ENCODE measurements at regions of chr17 and their contacts with region 1.

Region 1: DNA sequence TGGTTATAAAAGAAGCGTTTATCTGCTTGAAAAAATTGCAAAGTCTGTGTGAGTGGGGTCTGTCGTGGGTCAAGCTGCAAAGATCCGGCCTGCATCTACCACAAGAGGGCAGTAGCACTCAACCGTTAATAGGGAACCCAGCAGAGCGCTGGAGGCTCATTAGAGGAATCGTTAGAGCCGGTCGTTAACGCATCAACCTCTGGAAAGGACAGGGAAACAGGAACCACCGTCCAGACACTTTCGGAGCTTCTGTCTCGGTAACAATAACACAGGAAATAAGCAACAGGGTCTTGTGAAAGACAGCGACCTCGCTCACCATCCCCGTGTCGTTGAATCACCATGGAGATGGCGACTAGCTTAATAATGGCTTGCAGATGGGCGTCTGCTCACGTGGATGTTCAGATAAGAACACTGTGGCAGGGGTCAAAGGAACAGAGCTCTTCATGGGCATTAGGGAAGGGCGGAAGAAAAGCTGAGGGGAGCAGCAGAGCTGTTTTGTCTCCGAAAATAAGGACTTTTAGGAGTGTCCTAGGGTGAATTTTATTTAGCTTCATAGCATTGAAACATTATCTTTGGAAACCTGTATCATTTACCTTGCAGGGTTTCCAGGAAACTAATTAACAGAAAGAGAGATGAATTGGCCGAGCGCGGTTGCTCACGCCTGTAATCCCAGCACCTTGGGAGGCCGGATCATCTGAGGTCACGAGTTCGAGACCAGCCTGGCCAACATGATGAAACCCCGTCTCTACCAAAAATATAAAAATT is 11.9 kb upstream of the NSRP1 start:
- DNase-seq: peak; percentile 80
- H3K4me3 Mint-ChIP-seq: peak overlapping the region; percentile 66
- H3K27ac Mint-ChIP-seq: no peak overlapping the region
- H3K4me1 Mint-ChIP-seq: peaks cover 5% of the 10 kb centered on the region
- H3K27me3 Mint-ChIP-seq: no peaks in the 10 kb centered on the region
- CTCF ChIP-seq: peak; percentile 88

Region 2: DNA sequence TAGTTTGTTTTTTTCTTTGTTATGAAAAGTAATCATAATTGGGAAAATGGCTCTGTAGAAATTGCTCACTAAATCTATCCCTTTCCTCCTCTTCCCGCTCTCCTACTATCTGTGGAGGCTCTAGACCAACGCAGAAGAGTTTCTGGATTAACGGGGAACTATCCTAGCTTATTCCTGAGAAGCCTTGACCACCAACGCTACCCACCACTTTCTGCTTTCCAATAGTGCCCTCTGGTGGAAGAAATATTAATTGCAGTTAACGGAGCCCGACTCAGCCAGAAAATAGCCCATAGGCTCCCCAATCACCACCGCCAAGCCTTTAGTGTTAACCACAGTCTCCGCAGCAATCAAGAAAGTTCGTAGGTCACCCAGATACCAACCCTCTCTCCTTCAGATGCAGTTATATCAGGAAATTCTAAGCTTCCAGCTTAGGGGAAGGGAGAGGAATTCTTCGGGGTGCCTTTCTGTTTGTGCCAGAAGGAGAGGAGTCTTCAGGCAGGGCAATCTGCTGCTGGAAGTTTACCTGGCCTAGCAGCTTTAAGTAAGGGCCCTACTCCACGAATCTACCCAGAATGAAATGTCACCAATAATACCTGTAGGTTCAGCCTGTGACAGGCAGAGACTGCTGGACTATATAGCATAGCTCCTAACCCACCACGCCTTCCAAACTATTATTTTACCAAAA is 11.2 kb before region 1 on chr17:
- CTCF ChIA-PET with region 1: interaction called, 70 read pairs
- POLR2A ChIA-PET with region 1: interaction called, 5 read pairs
- intact Hi-C with region 1: no loop called
- DNase-seq: peak; percentile 73
- H3K4me3 Mint-ChIP-seq: no peak overlapping the region
- H3K27ac Mint-ChIP-seq: no peak overlapping the region
- H3K4me1 Mint-ChIP-seq: peaks cover 14% of the 10 kb centered on the region
- H3K27me3 Mint-ChIP-seq: peaks cover 29% of the 10 kb centered on the region
- CTCF ChIP-seq: peak; percentile 78

Region 3: GRCh38 chr17:30124273-30124796 is 19.6 kb after region 1 on chr17:
- CTCF ChIA-PET with region 1: interaction called, 32 read pairs
- POLR2A ChIA-PET with region 1: interaction called, 3 read pairs
- intact Hi-C with region 1: no loop called
- DNase-seq: no peak
- H3K4me3 Mint-ChIP-seq: no peak overlapping the region
- H3K27ac Mint-ChIP-seq: peak overlapping the region; percentile 61
- H3K4me1 Mint-ChIP-seq: peaks cover 29% of the 10 kb centered on the region
- H3K27me3 Mint-ChIP-seq: no peaks in the 10 kb centered on the region
- CTCF ChIP-seq: no peak

Region 4: GRCh38 chr17:30244853-30245385 is 140.2 kb after region 1 on chr17:
- CTCF ChIA-PET with region 1: no interaction called
- POLR2A ChIA-PET with region 1: no interaction called
- intact Hi-C with region 1: no loop called
- DNase-seq: no peak
- H3K4me3 Mint-ChIP-seq: no peak overlapping the region
- H3K27ac Mint-ChIP-seq: no peak overlapping the region
- H3K4me1 Mint-ChIP-seq: no peaks in the 10 kb centered on the region
- H3K27me3 Mint-ChIP-seq: no peaks in the 10 kb centered on the region
- CTCF ChIP-seq: no peak

Region 5: GRCh38 chr17:30278032-30278431 is 173.3 kb after region 1 on chr17:
- CTCF ChIA-PET with region 1: interaction called, 3 read pairs
- POLR2A ChIA-PET with region 1: no interaction called
- intact Hi-C with region 1: loop called (anchors 1 kb)
- DNase-seq: peak; percentile 5
- H3K4me3 Mint-ChIP-seq: no peak overlapping the region
- H3K27ac Mint-ChIP-seq: no peak overlapping the region
- H3K4me1 Mint-ChIP-seq: no peaks in the 10 kb centered on the region
- H3K27me3 Mint-ChIP-seq: no peaks in the 10 kb centered on the region
- CTCF ChIP-seq: no peak

Region 6: GRCh38 chr17:30336369-30337171 is 231.8 kb after region 1 on chr17:
- CTCF ChIA-PET with region 1: interaction called, 23 read pairs
- POLR2A ChIA-PET with region 1: interaction called, 3 read pairs
- intact Hi-C with region 1: no loop called
- DNase-seq: peak; percentile 78
- H3K4me3 Mint-ChIP-seq: no peak overlapping the region
- H3K27ac Mint-ChIP-seq: no peak overlapping the region
- H3K4me1 Mint-ChIP-seq: peaks cover 20% of the 10 kb centered on the region
- H3K27me3 Mint-ChIP-seq: no peaks in the 10 kb centered on the region
- CTCF ChIP-seq: peak; percentile 67

Region 7: DNA sequence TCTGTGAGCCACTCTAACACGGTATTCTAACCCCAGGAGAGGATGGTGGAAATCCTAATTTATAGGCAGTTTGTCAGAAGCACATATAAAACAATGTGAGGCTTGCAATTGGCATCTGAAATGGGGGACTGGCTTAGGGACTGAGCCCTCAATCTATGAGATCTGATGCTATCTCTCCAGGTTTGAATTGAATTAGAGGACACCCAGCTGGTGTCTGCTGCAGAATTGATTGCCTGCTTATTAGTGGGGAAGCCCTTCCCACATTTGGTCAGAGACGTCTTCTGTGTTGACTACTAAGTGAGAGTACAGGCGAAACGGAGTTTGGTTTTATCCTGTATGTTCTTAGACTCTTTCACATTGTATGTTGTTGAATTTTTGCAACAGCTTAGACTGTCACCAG is 242.7 kb after region 1 on chr17:
- CTCF ChIA-PET with region 1: no interaction called
- POLR2A ChIA-PET with region 1: no interaction called
- intact Hi-C with region 1: no loop called
- DNase-seq: no peak
- H3K4me3 Mint-ChIP-seq: no peak overlapping the region
- H3K27ac Mint-ChIP-seq: no peak overlapping the region
- H3K4me1 Mint-ChIP-seq: peaks cover 12% of the 10 kb centered on the region
- H3K27me3 Mint-ChIP-seq: no peaks in the 10 kb centered on the region
- CTCF ChIP-seq: no peak

Region 8: DNA sequence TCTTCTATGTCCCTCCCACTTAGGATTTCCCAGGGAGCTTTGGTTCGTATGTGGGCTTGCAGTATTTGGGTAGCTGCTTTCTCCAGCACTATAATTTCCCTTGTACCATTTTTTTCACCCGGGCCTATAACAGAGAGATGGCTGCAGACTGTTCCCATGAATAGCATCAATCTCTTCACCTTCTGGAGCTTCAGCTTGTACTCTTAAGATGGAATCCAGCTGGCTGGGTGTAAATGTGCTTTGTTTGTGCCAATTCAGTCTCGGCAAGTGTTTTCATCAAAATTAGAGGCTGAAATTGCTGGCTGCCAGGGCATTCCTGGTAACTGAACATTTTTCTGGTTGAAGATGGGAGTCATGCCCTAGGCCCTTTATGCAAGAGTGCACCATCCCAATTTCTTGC is 261.8 kb after region 1 on chr17:
- CTCF ChIA-PET with region 1: no interaction called
- POLR2A ChIA-PET with region 1: no interaction called
- intact Hi-C with region 1: no loop called
- DNase-seq: no peak
- H3K4me3 Mint-ChIP-seq: no peak overlapping the region
- H3K27ac Mint-ChIP-seq: no peak overlapping the region
- H3K4me1 Mint-ChIP-seq: peaks cover 12% of the 10 kb centered on the region
- H3K27me3 Mint-ChIP-seq: no peaks in the 10 kb centered on the region
- CTCF ChIP-seq: no peak

Region 9: GRCh38 chr17:30716461-30717300 is 611.9 kb after region 1 on chr17:
- CTCF ChIA-PET with region 1: interaction called, 3 read pairs
- POLR2A ChIA-PET with region 1: no interaction called
- intact Hi-C with region 1: loop called (anchors 10 kb)
- DNase-seq: no peak
- H3K4me3 Mint-ChIP-seq: no peak overlapping the region
- H3K27ac Mint-ChIP-seq: no peak overlapping the region
- H3K4me1 Mint-ChIP-seq: peaks cover 16% of the 10 kb centered on the region
- H3K27me3 Mint-ChIP-seq: no peaks in the 10 kb centered on the region
- CTCF ChIP-seq: no peak

Measured in MCF 10A (cell line).